ENCODE measurements at regions of chr3 and their contacts with region 1.

Region 1: DNA sequence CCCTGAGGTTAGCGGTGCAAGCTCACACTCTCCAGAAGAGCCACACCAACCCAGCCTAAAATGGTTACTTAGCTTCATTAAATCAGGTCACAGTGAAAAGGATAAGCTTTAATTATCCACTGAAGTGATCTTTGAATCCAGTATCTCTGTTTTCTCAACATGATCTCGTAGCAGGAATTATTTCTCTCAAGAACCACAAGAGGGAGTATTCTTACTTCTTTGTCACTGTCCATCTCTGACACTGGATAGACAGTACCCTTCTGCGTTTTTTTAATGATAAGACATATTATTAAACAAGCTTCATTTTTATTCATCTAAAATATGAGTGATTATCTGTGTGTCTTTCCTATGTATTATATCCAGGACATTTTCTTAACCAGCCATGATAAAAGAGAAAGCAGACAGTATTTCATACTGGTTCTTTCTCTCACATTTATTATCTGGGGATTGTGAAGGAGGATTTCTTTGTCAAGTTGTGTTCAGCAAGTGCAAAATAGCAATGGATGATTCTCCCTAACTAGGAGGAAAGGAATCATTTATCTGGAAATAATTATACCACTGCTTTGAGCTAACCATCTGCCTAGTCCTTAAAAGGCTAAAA is 105.4 kb upstream of the CCDC54 start:
- DNase-seq: no peak
- H3K4me3 ChIP-seq: no peak overlapping the region
- H3K27ac ChIP-seq: no peak overlapping the region
- H3K27me3 ChIP-seq: no peaks in the 10 kb centered on the region
- CTCF ChIP-seq: peak; percentile 68

Region 2: GRCh38 chr3:107064445-107065060 is 207.3 kb before region 1 on chr3:
- CTCF ChIA-PET with region 1: no interaction called
- POLR2A ChIA-PET with region 1: no interaction called
- DNase-seq: peak; percentile 43
- H3K4me3 ChIP-seq: no peak overlapping the region
- H3K27ac ChIP-seq: no peak overlapping the region
- H3K27me3 ChIP-seq: no peaks in the 10 kb centered on the region
- CTCF ChIP-seq: peak; percentile 91

Region 3: GRCh38 chr3:107258300-107258699 is 13.6 kb before region 1 on chr3:
- CTCF ChIA-PET with region 1: interaction called, 33 read pairs
- POLR2A ChIA-PET with region 1: no interaction called
- DNase-seq: no peak
- H3K4me3 ChIP-seq: no peak overlapping the region
- H3K27ac ChIP-seq: no peak overlapping the region
- H3K27me3 ChIP-seq: no peaks in the 10 kb centered on the region
- CTCF ChIP-seq: no peak

Region 4: DNA sequence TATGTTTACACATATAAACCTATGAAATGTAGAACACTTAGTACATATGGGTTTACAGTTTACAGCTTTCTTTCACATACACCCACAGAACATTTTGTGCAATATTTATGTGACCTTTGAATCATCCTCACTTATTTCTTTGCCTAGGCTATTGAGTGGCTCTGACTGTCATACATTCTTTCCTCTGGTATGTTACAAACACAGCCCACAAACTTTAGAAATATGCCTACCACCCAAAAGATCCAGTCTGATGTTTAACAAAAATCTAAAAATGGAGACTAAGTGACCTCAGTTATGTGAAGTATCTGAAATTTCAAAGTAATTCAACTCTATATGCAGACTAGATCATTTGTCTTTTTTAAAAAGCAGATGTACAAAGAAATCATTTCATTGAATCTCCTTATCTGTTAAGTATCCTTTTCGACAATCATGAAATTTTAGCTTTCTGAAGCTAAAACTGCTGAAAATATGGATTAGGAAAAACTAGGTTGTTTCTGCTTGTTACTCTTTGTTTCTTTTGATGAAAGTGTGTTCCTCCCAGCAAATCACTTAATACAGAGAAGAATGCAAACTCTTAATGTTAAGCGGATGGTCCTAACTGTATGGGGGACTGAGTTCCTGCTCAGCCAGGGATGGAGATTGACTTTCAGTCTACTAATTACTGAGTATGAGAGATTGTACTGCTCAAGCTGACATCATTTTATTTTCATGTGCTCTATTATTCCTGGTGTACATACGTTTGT is 133.0 kb after region 1 on chr3:
- CTCF ChIA-PET with region 1: interaction called, 16 read pairs
- POLR2A ChIA-PET with region 1: no interaction called
- DNase-seq: no peak
- H3K4me3 ChIP-seq: no peak overlapping the region
- H3K27ac ChIP-seq: no peak overlapping the region
- H3K27me3 ChIP-seq: no peaks in the 10 kb centered on the region
- CTCF ChIP-seq: no peak

Region 5: DNA sequence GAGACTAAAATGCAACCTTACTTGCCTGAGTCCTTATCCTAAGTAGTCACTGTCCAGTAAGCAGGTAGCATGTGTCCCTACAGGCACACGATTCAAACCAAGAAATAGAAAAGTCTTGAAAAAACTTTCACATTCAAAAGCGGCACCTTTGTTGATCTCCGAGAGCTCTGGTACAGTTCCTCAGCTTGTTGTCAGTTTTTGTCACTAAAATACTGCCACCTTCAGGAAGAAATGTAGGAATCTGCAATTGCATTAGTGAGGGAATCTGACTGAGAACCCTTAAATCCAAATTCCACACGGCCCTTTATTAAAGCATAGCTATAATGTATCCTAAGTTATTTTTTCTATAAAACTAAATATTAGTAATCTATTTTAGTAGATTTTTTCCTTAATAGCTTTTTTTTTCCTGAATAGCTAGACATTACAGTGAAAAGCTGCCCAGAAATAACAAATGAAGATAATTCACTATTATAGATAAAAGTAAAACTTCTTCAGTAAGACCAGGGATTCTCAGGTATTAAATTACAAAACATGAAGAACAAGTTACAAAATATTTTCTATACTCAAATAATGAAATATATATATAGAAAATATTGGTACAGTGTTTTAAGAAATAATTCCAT is 149.4 kb after region 1 on chr3:
- CTCF ChIA-PET with region 1: interaction called, 166 read pairs
- POLR2A ChIA-PET with region 1: no interaction called
- DNase-seq: no peak
- H3K4me3 ChIP-seq: peak overlapping the region; percentile 47
- H3K27ac ChIP-seq: no peak overlapping the region
- H3K27me3 ChIP-seq: no peaks in the 10 kb centered on the region
- CTCF ChIP-seq: peak; percentile 69

Region 6: DNA sequence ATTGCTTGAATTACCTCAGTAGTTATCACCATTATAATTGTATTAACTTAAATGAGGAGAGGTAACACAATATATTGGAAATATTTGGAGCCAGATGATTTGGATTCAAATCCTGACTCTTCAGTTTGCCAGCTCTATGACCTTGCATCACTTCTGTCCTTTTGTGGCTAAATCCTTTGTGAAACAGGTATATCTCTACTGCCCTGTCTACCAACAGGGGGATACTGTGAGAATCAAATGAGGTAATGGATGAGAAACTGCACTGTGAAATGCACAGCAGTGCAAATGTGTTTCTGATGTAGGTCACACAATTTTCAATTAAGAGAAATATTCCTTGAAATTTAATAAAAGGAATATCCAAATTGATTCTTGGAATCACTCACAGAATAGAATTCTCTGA is 164.1 kb after region 1 on chr3:
- CTCF ChIA-PET with region 1: interaction called, 137 read pairs
- POLR2A ChIA-PET with region 1: no interaction called
- DNase-seq: no peak
- H3K4me3 ChIP-seq: no peak overlapping the region
- H3K27ac ChIP-seq: no peak overlapping the region
- H3K27me3 ChIP-seq: no peaks in the 10 kb centered on the region
- CTCF ChIP-seq: no peak

Region 7: DNA sequence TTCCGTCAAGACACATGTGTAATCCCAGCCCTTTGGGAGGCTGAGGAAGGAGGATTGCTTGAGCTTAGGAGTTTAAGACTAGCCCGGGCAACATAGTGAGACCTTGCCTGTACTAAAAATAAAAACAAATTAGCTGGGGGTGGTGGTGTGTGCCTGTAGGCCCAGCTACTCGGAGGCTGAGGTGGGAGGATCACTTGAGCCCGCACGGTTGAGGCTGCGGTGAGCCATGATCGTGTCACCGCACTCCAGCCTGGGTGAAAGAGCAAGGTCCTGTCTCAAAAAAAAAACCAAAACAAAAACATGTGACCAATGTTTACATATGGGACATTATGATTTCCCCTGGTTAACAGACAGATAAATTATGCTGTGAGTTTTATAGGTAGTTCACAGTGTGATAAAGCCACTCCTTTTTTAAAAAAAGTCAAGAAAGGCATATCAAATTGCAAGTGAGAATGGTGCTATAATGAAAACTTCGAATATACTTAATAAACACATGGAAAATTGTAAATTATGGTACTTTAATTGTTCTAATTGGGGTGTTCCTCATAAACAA is 260.1 kb after region 1 on chr3:
- CTCF ChIA-PET with region 1: interaction called, 15 read pairs
- POLR2A ChIA-PET with region 1: no interaction called
- DNase-seq: no peak
- H3K4me3 ChIP-seq: no peak overlapping the region
- H3K27ac ChIP-seq: no peak overlapping the region
- H3K27me3 ChIP-seq: no peaks in the 10 kb centered on the region
- CTCF ChIP-seq: no peak

Region 8: GRCh38 chr3:107740992-107741896 is 469.4 kb after region 1 on chr3:
- CTCF ChIA-PET with region 1: interaction called, 16 read pairs
- POLR2A ChIA-PET with region 1: no interaction called
- DNase-seq: no peak
- H3K4me3 ChIP-seq: no peak overlapping the region
- H3K27ac ChIP-seq: no peak overlapping the region
- H3K27me3 ChIP-seq: no peaks in the 10 kb centered on the region
- CTCF ChIP-seq: peak; percentile 62

Measured in AG04450 (cell line).